Naive thymus-derived CD4-positive, alpha-beta T cell (primary cell): ENCODE measurements at regions of chr2 and their contacts with region 1.

Region 1: DNA sequence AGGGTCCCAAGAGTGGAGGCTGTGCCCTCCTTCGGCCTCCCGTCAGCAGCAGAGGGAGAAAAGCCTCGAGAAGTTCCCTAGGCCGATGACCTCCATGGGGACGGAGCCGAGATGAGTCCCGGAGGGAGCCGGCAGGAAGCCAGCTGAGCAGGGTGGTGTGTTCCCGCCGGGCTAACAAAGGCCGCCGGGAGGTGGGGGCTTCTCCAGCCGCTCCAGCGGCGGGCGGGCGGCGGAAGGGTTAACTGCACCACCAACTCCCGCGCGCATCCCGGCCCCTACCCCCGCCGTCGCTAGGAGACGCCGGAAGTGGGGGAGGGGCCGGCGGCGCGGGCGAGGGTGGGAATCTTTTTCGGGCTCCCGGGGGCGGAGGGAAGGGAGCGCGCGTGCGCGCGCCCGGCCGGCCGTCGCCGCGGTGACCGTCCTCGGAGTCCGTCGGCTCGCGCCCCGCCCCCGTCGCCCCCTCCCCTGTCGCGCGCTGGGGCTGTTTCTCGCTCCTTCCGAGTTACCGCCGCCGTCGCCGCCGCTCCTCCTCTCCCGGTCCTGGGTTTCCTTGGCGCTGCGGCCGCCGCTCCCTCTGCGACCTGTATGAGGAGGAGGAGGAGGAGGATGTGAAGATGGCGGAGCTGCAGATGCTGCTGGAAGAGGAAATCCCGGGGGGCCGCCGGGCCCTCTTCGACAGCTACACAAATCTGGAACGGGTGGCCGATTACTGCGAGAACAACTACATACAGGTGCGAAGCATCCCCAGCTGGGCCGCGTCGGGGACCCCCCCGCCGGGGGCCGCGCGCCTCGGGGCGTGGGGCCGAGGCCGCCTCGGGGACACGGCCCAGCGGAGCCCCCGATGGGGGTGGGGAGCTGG is at the start of gene ABI2:
- DNase-seq: peak; percentile 27 to 81 (median 51)
- ATAC-seq: peak; percentile 71
- H3K4me3 ChIP-seq: peak within 1 kb of the TSS; percentile 84
- H3K4me3 Mint-ChIP-seq: peak within 1 kb of the TSS; percentile 85 to 97 (median 93)
- H3K27ac ChIP-seq: peak within 1 kb of the TSS; percentile 72
- H3K27ac Mint-ChIP-seq: peak within 1 kb of the TSS; percentile 72 to 96 (median 90)
- H3K4me1 ChIP-seq: peaks cover 7 to 15% of the 10 kb centered on the region in 2 donors
- H3K4me1 Mint-ChIP-seq: peaks cover 21 to 40% (median 33%) of the 10 kb centered on the region in 7 donors
- H3K27me3 ChIP-seq: no peaks in the 10 kb centered on the region
- H3K27me3 Mint-ChIP-seq: no peaks in the 10 kb centered on the region
- total RNA-seq, gene ABI2: 19.5 to 41.5 (median 28.2) TPM

Region 2: DNA sequence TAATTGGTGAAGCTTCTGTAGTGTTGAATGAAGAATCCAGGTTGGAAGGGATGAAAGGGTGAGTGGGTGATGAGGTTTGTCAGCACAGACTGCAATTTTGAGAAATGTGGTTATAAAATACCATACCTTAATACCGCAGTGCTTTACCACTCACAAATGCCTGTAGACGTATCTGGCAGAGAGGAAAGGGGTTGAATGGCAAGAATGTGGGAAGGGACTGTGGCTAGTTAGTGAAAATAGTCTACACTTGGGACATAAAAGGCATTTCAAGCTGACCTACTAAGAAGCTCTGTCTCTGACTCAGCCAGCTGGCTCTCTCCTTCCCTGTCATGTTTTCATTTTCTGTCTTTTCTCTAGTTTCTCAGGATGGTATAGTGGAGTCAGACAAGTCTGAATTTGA is 1496.7 kb before region 1 on chr2:
- CTCF ChIA-PET with region 1: no interaction called
- POLR2A ChIA-PET with region 1: no interaction called
- intact Hi-C with region 1: no loop called
- DNase-seq: no peak
- ATAC-seq: no peak
- H3K4me3 ChIP-seq: no peak overlapping the region
- H3K4me3 Mint-ChIP-seq: no peak overlapping the region
- H3K27ac ChIP-seq: no peak overlapping the region
- H3K27ac Mint-ChIP-seq: no peak overlapping the region
- H3K4me1 ChIP-seq: no peaks in the 10 kb centered on the region
- H3K4me1 Mint-ChIP-seq: no peaks in the 10 kb centered on the region
- H3K27me3 ChIP-seq: no peaks in the 10 kb centered on the region
- H3K27me3 Mint-ChIP-seq: peaks cover 3 to 15% (median 12%) of the 10 kb centered on the region in 5 donors

Region 3: GRCh38 chr2:202238234-202239197 is 1089.6 kb before region 1 on chr2 and contains the start of gene SUMO1:
- CTCF ChIA-PET with region 1: no interaction called
- POLR2A ChIA-PET with region 1: no interaction called
- intact Hi-C with region 1: loop called in 1 of 2 experiments (anchors 5 kb)
- DNase-seq: peak; percentile 80 to 95 (median 93)
- ATAC-seq: peak; percentile 98
- H3K4me3 ChIP-seq: peak within 1 kb of the TSS; percentile 82
- H3K4me3 Mint-ChIP-seq: peak within 1 kb of the TSS; percentile 91 to 100 (median 97)
- H3K27ac ChIP-seq: peak within 1 kb of the TSS; percentile 88
- H3K27ac Mint-ChIP-seq: peak within 1 kb of the TSS; percentile 96 to 99 (median 97)
- H3K4me1 ChIP-seq: peaks cover 11% of the 10 kb centered on the region in 2 donors
- H3K4me1 Mint-ChIP-seq: peaks cover 10 to 51% (median 35%) of the 10 kb centered on the region in 7 donors
- H3K27me3 ChIP-seq: no peaks in the 10 kb centered on the region
- H3K27me3 Mint-ChIP-seq: peaks cover 0 to 2% (median 0%) of the 10 kb centered on the region in 5 donors
- total RNA-seq, gene SUMO1: 48.1 to 104 (median 56.8) TPM

Region 4: DNA sequence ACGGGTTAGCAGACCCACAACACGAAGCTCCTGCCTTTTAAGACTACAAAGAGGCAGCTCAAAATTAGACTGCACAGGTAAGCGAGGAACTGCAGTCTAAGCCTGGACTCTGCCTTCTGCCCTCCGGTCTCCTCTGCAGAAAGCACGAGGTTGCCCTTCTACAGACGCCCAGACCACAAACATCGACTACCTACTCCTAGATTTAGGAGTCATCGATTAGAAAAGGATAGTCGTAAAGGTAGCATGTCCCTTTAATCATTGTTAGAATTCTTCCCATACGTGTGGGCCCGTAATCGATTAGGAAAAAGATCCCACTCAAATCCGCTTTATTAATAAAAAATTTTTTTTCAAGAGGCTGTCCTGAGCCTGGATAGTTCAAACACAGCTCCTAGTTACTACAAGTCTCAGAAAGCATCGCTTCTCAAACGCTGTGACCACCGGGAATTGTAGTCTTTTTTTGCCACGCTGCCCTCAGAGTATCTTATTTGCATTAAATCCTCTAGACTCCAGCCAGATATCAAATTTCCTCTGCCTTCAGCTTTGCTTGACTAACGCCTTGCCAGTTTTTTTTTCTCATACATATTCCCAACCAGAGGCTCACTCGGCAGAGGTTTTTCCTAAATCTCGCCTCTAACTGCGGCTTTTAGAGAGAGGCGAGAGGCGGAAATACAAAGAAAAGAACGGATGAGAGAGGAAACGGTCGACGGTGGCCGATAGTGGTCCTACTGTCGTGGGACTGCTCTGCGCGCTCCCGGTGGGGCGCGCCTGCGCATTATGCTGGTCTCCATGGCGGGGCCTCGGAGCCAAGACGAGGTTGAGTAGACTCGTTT is 416.4 kb before region 1 on chr2 and contains the starts of genes CARF and WDR12:
- CTCF ChIA-PET with region 1: no interaction called
- POLR2A ChIA-PET with region 1: no interaction called
- intact Hi-C with region 1: loop called in 1 of 2 experiments (anchors 5 kb)
- DNase-seq: peak; percentile 81 to 93 (median 89)
- ATAC-seq: peak; percentile 93
- H3K4me3 ChIP-seq: peak within 1 kb of the TSS; percentile 82
- H3K4me3 Mint-ChIP-seq: peak within 1 kb of the TSS; percentile 90 to 100 (median 98)
- H3K27ac ChIP-seq: peak within 1 kb of the TSS; percentile 79
- H3K27ac Mint-ChIP-seq: peak within 1 kb of the TSS; percentile 93 to 99 (median 97)
- H3K4me1 ChIP-seq: peaks cover 4 to 11% of the 10 kb centered on the region in 2 donors
- H3K4me1 Mint-ChIP-seq: peaks cover 24 to 50% (median 34%) of the 10 kb centered on the region in 7 donors
- H3K27me3 ChIP-seq: no peaks in the 10 kb centered on the region
- H3K27me3 Mint-ChIP-seq: no peaks in the 10 kb centered on the region
- total RNA-seq, gene CARF: 10.2 to 31.2 (median 15.4) TPM
- total RNA-seq, gene WDR12: 17.2 to 50.4 (median 20.8) TPM

Region 5: GRCh38 chr2:203014456-203015199 is 313.5 kb before region 1 on chr2 and contains the start of gene NBEAL1:
- CTCF ChIA-PET with region 1: no interaction called
- POLR2A ChIA-PET with region 1: no interaction called
- intact Hi-C with region 1: loop called (anchors 1 to 5 kb)
- DNase-seq: peak; percentile 88 to 99 (median 90)
- ATAC-seq: peak; percentile 95
- H3K4me3 ChIP-seq: peak within 1 kb of the TSS; percentile 92
- H3K4me3 Mint-ChIP-seq: peak within 1 kb of the TSS; percentile 90 to 97 (median 95)
- H3K27ac ChIP-seq: peak within 1 kb of the TSS; percentile 92
- H3K27ac Mint-ChIP-seq: peak within 1 kb of the TSS; percentile 84 to 98 (median 94)
- H3K4me1 ChIP-seq: peaks cover 5 to 14% of the 10 kb centered on the region in 2 donors
- H3K4me1 Mint-ChIP-seq: peaks cover 18 to 48% (median 41%) of the 10 kb centered on the region in 7 donors
- H3K27me3 ChIP-seq: no peaks in the 10 kb centered on the region
- H3K27me3 Mint-ChIP-seq: peaks cover 0 to 19% (median 0%) of the 10 kb centered on the region in 5 donors
- total RNA-seq, gene NBEAL1: 11.6 to 15.9 (median 12.6) TPM

Region 6: GRCh38 chr2:203418271-203418670 is 90.1 kb after region 1 on chr2:
- CTCF ChIA-PET with region 1: no interaction called
- POLR2A ChIA-PET with region 1: no interaction called
- intact Hi-C with region 1: no loop called
- DNase-seq: no peak
- ATAC-seq: no peak
- H3K4me3 ChIP-seq: no peak overlapping the region
- H3K4me3 Mint-ChIP-seq: no peak overlapping the region
- H3K27ac ChIP-seq: no peak overlapping the region
- H3K27ac Mint-ChIP-seq: no peak overlapping the region
- H3K4me1 ChIP-seq: no peaks in the 10 kb centered on the region
- H3K4me1 Mint-ChIP-seq: no peaks in the 10 kb centered on the region
- H3K27me3 ChIP-seq: no peaks in the 10 kb centered on the region
- H3K27me3 Mint-ChIP-seq: no peaks in the 10 kb centered on the region

Region 7: GRCh38 chr2:203453858-203454451 is 125.8 kb after region 1 on chr2:
- CTCF ChIA-PET with region 1: no interaction called
- POLR2A ChIA-PET with region 1: no interaction called
- intact Hi-C with region 1: loop called in 1 of 2 experiments (anchors 5 kb)
- DNase-seq: peak in 7 of 9 donors; percentile 10 to 52 (median 34)
- ATAC-seq: peak; percentile 73
- H3K4me3 ChIP-seq: no peak overlapping the region
- H3K4me3 Mint-ChIP-seq: no peak overlapping the region
- H3K27ac ChIP-seq: no peak overlapping the region
- H3K27ac Mint-ChIP-seq: no peak overlapping the region
- H3K4me1 ChIP-seq: no peaks in the 10 kb centered on the region
- H3K4me1 Mint-ChIP-seq: peaks cover 0 to 1% (median 0%) of the 10 kb centered on the region in 7 donors
- H3K27me3 ChIP-seq: no peaks in the 10 kb centered on the region
- H3K27me3 Mint-ChIP-seq: no peaks in the 10 kb centered on the region

Region 8: GRCh38 chr2:203535078-203535783 is 207.1 kb after region 1 on chr2 and contains the start of gene RAPH1:
- CTCF ChIA-PET with region 1: no interaction called
- POLR2A ChIA-PET with region 1: no interaction called
- intact Hi-C with region 1: no loop called
- DNase-seq: peak; percentile 24 to 72 (median 51)
- ATAC-seq: peak; percentile 77
- H3K4me3 ChIP-seq: peak within 1 kb of the TSS; percentile 71
- H3K4me3 Mint-ChIP-seq: peak within 1 kb of the TSS; percentile 79 to 95 (median 90)
- H3K27ac ChIP-seq: peak within 1 kb of the TSS; percentile 49
- H3K27ac Mint-ChIP-seq: peak within 1 kb of the TSS; percentile 32 to 90 (median 73)
- H3K4me1 ChIP-seq: peaks cover 10 to 15% of the 10 kb centered on the region in 2 donors
- H3K4me1 Mint-ChIP-seq: peaks cover 16 to 30% (median 28%) of the 10 kb centered on the region in 7 donors
- H3K27me3 ChIP-seq: no peaks in the 10 kb centered on the region
- H3K27me3 Mint-ChIP-seq: peaks cover 6 to 75% (median 16%) of the 10 kb centered on the region in 5 donors
- total RNA-seq, gene RAPH1: 1.8 to 5.5 (median 3.0) TPM